ENCODE measurements at regions of chr7 and their contacts with region 1.

Region 1: GRCh38 chr7:151244196-151244840 is 4.2 kb downstream of the SMARCD3 start:
- DNase-seq: peak; percentile 78
- ATAC-seq: peak; percentile 27
- H3K4me3 Mint-ChIP-seq: peak overlapping the region; percentile 35
- H3K27ac Mint-ChIP-seq: no peak overlapping the region
- H3K4me1 Mint-ChIP-seq: peaks cover 35% of the 10 kb centered on the region
- H3K27me3 Mint-ChIP-seq: peaks cover 38% of the 10 kb centered on the region

Region 2: DNA sequence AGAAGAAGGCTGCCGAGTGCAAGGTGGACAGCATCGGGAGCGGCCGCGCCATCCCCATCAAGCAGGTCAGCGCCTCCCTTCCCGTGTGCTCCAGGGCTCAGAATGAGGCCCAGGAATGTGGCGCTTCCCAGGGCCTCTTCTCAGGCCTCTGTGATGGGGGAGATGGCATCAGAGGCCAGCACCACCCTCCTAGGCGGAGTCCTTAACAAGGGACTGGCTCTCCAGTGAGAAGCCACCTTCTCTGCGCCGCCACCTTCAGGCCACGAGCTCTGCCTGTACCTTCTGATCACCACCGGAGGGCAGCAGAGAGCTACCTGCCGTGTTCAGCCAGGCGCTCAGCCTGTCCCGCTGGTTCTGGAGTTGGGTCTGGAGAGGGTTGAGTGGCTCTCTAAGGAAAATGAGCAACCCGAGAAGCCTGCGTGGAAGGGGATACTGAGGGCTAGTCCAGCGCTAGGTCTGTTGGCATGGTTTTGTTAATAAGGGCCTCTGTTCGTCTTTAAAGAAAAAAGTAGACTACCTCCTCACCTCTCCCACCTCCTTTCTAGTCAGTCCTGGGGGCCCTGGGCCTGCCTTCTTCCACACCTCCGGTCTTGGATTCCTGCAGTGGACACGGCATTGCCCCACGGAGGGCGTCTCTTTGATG is 120.4 kb before region 1 on chr7:
- CTCF ChIA-PET with region 1: interaction called, 60 read pairs
- DNase-seq: peak; percentile 86
- ATAC-seq: peak; percentile 95
- H3K4me3 Mint-ChIP-seq: no peak overlapping the region
- H3K27ac Mint-ChIP-seq: no peak overlapping the region
- H3K4me1 Mint-ChIP-seq: no peaks in the 10 kb centered on the region
- H3K27me3 Mint-ChIP-seq: peaks cover 3% of the 10 kb centered on the region

Region 3: DNA sequence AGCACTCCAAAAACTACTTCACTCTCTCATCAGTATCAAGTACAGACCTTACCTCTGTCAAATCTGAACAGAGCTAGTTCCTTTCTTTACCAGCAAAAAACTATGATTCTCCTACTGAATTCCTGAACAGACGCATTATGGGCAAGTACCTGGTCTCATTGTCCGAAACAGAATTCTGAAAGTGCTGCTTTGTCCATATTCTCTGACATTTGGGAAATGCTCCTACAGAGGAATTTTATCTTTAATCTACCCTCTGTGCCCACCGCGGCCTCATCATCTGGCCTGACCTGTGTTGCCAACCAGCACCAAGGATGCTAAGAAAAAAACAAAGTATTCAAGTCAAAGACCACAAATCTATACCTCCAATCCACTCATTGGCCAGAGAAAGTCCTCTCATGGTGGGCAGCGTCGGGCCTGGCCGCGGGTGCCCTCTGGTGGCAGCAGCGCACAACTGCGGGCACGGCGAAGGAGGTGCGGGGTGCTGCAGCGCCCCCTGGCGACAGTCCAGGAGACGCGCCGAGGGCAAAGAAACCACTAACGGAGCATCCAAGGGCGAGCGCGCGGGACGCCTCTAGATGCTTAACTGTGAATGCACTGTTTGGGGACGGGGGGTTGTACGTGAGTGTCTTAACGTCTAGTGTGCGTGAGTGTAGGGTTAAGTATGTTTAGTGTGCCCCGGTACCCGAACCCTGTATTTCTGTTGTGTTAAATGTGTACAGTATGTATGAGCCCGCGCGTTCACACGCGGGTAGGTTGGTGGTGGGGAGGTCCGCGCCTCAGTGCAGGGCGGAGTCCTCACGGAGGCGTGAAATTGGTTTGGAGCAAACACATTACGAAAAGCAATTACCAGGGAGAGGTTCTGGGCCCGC is 71.8 kb before region 1 on chr7:
- CTCF ChIA-PET with region 1: interaction called, 18 read pairs
- DNase-seq: peak; percentile 84
- ATAC-seq: peak; percentile 70
- H3K4me3 Mint-ChIP-seq: no peak overlapping the region
- H3K27ac Mint-ChIP-seq: no peak overlapping the region
- H3K4me1 Mint-ChIP-seq: peaks cover 12% of the 10 kb centered on the region
- H3K27me3 Mint-ChIP-seq: peaks cover 52% of the 10 kb centered on the region

Region 4: GRCh38 chr7:151206914-151207313 is 37.4 kb before region 1 on chr7:
- CTCF ChIA-PET with region 1: interaction called, 16 read pairs
- DNase-seq: peak; percentile 63
- ATAC-seq: peak; percentile 75
- H3K4me3 Mint-ChIP-seq: no peak overlapping the region
- H3K27ac Mint-ChIP-seq: peak overlapping the region; percentile 70
- H3K4me1 Mint-ChIP-seq: peaks cover 24% of the 10 kb centered on the region
- H3K27me3 Mint-ChIP-seq: peaks cover 17% of the 10 kb centered on the region

Region 5: GRCh38 chr7:151226875-151227782 is 17.2 kb before region 1 on chr7 and contains the start of gene ABCF2:
- CTCF ChIA-PET with region 1: interaction called, 47 read pairs
- DNase-seq: peak; percentile 99
- ATAC-seq: peak; percentile 99
- H3K4me3 Mint-ChIP-seq: peak within 1 kb of the TSS; percentile 98
- H3K27ac Mint-ChIP-seq: peak within 1 kb of the TSS; percentile 92
- H3K4me1 Mint-ChIP-seq: peaks cover 38% of the 10 kb centered on the region
- H3K27me3 Mint-ChIP-seq: no peaks in the 10 kb centered on the region
- total RNA-seq, gene ABCF2: 37.8 to 47.3 TPM

Region 6: GRCh38 chr7:151232091-151232916 is 12.0 kb before region 1 on chr7 and contains the start of gene CHPF2:
- CTCF ChIA-PET with region 1: interaction called, 47 read pairs
- DNase-seq: peak; percentile 96
- ATAC-seq: peak; percentile 89
- H3K4me3 Mint-ChIP-seq: peak within 1 kb of the TSS; percentile 100
- H3K27ac Mint-ChIP-seq: peak within 1 kb of the TSS; percentile 100
- H3K4me1 Mint-ChIP-seq: peaks cover 33% of the 10 kb centered on the region
- H3K27me3 Mint-ChIP-seq: no peaks in the 10 kb centered on the region
- total RNA-seq, gene CHPF2: 46.1 to 46.8 TPM

Region 7: DNA sequence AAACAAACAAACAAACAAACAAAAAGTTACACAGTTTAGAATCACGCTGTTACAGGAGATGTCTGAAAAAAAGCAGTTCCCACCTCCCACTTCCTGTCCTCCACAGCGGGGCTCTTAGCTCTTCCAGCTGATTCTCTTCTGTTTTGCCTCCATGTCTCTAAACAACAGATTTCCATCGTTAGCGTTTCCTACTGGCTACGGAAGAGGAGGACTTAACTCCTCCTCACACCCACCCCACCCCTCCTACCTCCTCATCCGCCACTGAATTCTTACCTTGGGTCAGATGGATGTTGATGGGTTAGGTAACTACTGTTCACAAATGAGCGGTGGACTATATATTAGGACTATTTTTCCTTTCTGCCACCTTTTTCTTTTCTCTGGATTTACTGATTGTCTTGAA is 60.5 kb after region 1 on chr7:
- CTCF ChIA-PET with region 1: interaction called, 15 read pairs
- DNase-seq: no peak
- ATAC-seq: no peak
- H3K4me3 Mint-ChIP-seq: peak overlapping the region; percentile 23
- H3K27ac Mint-ChIP-seq: no peak overlapping the region
- H3K4me1 Mint-ChIP-seq: peaks cover 17% of the 10 kb centered on the region
- H3K27me3 Mint-ChIP-seq: peaks cover 41% of the 10 kb centered on the region

Measured in activated CD8-positive, alpha-beta memory T cell treated with anti-CD3 and anti-CD28 coated beads, Interleukin-2, amount 10 ng/mL, durations not matched to agents 7 days and 5 days (primary cell).